ENCODE measurements at regions of chr17 and their contacts with region 1.

Region 1: GRCh38 chr17:79839363-79840268 is at the start of gene CBX4:
- DNase-seq: peak; percentile 92
- ATAC-seq: peak; percentile 44
- H3K4me3 ChIP-seq: peak within 1 kb of the TSS; percentile 77 to 100 (median 87)
- H3K27ac ChIP-seq: peak within 1 kb of the TSS; percentile 71
- H3K4me1 ChIP-seq: peaks cover 68% of the 10 kb centered on the region
- H3K27me3 ChIP-seq: no peaks in the 10 kb centered on the region; a peak in 1 of 5 replicates
- CTCF ChIP-seq: peak; percentile 89
- EP300 ChIP-seq: peak in 1 of 2 experiments; percentile 51; a peak in 1 of 4 replicates
- POLR2A ChIP-seq: peak in 1 of 2 experiments; percentile 63; a peak in 2 of 4 replicates
- RAD21 ChIP-seq: peak; percentile 95
- total RNA-seq, gene CBX4: 17.1 and 25.8 TPM in 2 replicates

Region 2: GRCh38 chr17:79741751-79742588 is 97.6 kb before region 1 on chr17:
- CTCF ChIA-PET with region 1: interaction called, 4 read pairs
- POLR2A ChIA-PET with region 1: interaction called, 18 read pairs
- in situ Hi-C with region 1: no loop called
- intact Hi-C with region 1: loop called (anchors 10 kb)
- DNase-seq: peak; percentile 67
- ATAC-seq: peak; percentile 53
- H3K4me3 ChIP-seq: peak overlapping the region; percentile 53 to 75 (median 56)
- H3K27ac ChIP-seq: peak overlapping the region; percentile 38
- H3K4me1 ChIP-seq: peaks cover 93% of the 10 kb centered on the region
- H3K27me3 ChIP-seq: peaks cover 7 to 11% of the 10 kb centered on the region in 2 experiments; a peak in 4 of 5 replicates
- CTCF ChIP-seq: peak; percentile 98
- EP300 ChIP-seq: peak in 1 of 2 experiments; percentile 30; a peak in 1 of 4 replicates
- POLR2A ChIP-seq: no peak
- RAD21 ChIP-seq: peak; percentile 86

Region 3: GRCh38 chr17:79803997-79804855 is 35.4 kb before region 1 on chr17:
- CTCF ChIA-PET with region 1: interaction called, 7 read pairs
- POLR2A ChIA-PET with region 1: interaction called, 274 read pairs
- in situ Hi-C with region 1: no loop called
- intact Hi-C with region 1: loop called (anchors 5 kb)
- DNase-seq: no peak
- ATAC-seq: peak; percentile 39
- H3K4me3 ChIP-seq: peak overlapping the region in 2 of 3 experiments; percentile 6 to 54; a peak in 3 of 6 replicates
- H3K27ac ChIP-seq: no peak overlapping the region
- H3K4me1 ChIP-seq: peaks cover 66% of the 10 kb centered on the region
- H3K27me3 ChIP-seq: peaks cover 55 to 100% of the 10 kb centered on the region in 2 experiments
- CTCF ChIP-seq: no peak
- EP300 ChIP-seq: no peak
- POLR2A ChIP-seq: no peak
- RAD21 ChIP-seq: no peak

Region 4: GRCh38 chr17:79818026-79818758 is 21.4 kb before region 1 on chr17:
- CTCF ChIA-PET with region 1: no interaction called
- POLR2A ChIA-PET with region 1: interaction called, 274 read pairs
- in situ Hi-C with region 1: no loop called
- intact Hi-C with region 1: no loop called
- DNase-seq: no peak
- ATAC-seq: peak; percentile 66
- H3K4me3 ChIP-seq: no peak overlapping the region; a peak in 1 of 6 replicates
- H3K27ac ChIP-seq: no peak overlapping the region
- H3K4me1 ChIP-seq: peaks cover 58% of the 10 kb centered on the region
- H3K27me3 ChIP-seq: peaks cover 3 to 33% of the 10 kb centered on the region in 2 experiments; a peak in 4 of 5 replicates
- CTCF ChIP-seq: peak; percentile 53
- EP300 ChIP-seq: no peak
- POLR2A ChIP-seq: no peak
- RAD21 ChIP-seq: peak; percentile 44; the same call in 1 of the 2 replicates

Region 5: DNA sequence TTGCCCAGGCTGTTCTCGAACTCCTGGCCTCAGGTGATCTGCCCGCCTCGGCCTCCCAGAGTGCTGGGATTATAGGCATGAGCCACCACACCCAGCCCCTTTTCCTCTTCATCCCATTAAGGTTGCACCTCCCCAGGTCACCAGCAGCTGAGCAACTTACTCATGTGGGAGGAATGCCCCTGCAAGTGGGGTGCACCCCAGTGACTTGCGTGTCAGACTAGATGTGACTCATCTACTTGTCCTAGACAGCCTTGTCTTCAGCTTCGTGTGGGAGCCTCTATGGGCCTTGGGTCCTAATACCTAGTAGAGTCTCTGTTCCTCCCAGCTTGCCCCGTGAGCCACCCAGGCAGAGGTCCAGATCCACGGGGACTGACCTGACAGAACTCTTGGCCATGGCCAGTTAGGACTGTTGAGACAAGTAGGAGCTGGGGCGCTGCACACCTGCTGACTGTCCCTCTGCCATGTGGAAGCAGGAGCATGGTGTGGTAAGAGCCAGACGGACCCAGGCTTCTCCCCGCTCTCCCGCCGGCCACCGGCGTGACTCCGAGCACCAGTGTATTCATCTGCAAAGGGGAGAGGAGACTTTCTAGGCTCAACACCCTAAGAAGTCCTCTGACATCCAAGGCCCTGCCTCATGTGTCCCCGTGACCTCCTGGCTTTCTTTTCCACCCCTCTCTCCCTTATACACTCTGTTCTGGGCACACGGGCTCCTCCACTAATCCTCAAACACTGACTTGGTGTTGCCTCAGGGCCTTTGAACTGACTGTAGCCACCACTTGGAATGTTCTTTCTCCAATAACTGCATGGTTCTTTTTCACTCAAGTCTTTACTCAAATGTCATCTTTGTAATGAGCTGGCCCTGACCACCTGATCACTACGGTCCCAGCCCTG is 11.2 kb after region 1 on chr17:
- CTCF ChIA-PET with region 1: no interaction called
- POLR2A ChIA-PET with region 1: interaction called, 32 read pairs
- in situ Hi-C with region 1: no loop called
- intact Hi-C with region 1: no loop called
- DNase-seq: no peak
- ATAC-seq: no peak
- H3K4me3 ChIP-seq: no peak overlapping the region
- H3K27ac ChIP-seq: no peak overlapping the region
- H3K4me1 ChIP-seq: peaks cover 90% of the 10 kb centered on the region
- H3K27me3 ChIP-seq: peaks cover under 1% of the 10 kb centered on the region in 2 experiments; a peak in 1 of 5 replicates
- CTCF ChIP-seq: no peak
- EP300 ChIP-seq: no peak
- POLR2A ChIP-seq: no peak
- RAD21 ChIP-seq: no peak

Region 6: DNA sequence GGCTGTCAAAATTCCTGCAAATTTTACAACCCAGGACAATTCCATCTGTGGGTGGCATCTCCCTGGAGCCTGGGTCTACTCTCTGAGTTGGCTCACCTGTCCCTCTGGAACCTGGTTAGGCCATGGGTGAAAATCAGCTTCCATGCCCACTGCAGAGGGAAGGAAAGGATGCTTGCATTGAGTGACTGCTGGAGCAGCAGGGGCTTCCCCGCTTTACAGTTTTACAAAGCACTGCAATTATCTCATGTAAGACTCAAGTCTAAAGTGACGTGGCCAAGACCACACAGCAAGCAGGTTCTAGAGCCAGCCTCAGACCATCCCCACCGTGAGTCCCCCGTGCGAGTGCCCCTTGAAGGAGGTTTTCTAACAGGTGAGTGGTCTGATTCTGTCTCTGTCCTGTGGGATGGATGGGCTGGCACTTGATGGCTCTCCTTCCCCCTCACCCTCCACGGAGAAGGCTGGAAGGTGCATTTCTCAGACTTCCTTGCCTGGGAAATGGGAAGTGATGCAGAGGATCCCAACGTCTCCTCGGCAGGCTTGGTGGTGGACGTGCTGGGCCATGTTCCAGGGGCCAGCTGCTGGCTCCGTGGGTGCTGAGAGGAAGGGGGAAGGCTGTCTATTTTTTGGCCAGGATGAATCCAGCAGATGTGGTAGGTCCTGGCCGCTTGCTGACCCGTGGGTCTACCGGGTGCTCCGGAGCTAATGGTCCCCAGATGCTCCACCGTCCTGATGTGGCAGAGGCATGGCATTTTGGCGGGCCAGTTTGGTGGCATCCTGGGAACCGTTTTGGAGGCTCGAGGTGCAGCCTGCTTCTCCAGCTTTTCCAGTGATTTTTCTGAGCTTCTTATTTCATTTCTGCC is 26.0 kb after region 1 on chr17:
- CTCF ChIA-PET with region 1: no interaction called
- POLR2A ChIA-PET with region 1: no interaction called
- in situ Hi-C with region 1: no loop called
- intact Hi-C with region 1: no loop called
- DNase-seq: no peak
- ATAC-seq: no peak
- H3K4me3 ChIP-seq: no peak overlapping the region
- H3K27ac ChIP-seq: no peak overlapping the region
- H3K4me1 ChIP-seq: peaks cover 29% of the 10 kb centered on the region
- H3K27me3 ChIP-seq: peaks cover 22 to 69% of the 10 kb centered on the region in 2 experiments
- CTCF ChIP-seq: no peak
- EP300 ChIP-seq: no peak
- POLR2A ChIP-seq: no peak
- RAD21 ChIP-seq: no peak

Region 7: DNA sequence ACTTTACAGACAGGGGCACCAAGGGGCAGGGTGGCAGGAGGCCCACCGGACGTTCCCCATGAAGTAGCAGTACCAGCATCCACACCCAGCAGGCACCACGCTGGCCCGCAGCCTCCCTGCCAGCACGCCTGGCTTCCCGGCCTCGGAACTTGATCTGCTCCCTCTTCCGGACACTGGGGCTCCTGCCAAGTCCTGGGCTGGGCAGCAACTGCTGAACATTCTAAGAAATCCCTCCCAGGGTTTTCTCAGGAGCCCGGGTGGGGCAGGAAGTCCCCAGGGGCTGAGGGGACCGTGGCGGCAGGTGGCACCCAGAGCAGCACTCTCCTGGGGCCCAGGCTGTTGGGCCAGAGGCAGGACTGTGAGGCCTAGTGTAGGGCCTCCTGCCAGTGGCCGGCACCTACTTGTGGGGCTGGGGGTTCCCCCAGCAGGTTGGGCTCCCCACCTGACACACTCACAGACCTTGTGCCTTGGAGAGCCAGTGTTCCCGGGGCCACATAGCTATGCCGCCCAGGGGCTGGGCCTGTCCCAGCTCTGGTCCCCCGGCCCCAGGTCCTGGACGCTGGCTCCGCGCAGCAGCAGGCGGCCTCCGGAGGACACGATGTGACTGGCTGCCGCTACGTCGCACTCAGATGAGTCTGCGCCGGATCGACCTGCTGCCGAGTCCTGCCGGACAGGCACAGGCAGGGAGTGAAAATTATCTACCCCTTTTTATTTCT is 85.8 kb after region 1 on chr17:
- CTCF ChIA-PET with region 1: no interaction called
- POLR2A ChIA-PET with region 1: interaction called, 25 read pairs
- in situ Hi-C with region 1: loop called (anchors 5 kb)
- intact Hi-C with region 1: no loop called
- DNase-seq: no peak
- ATAC-seq: peak; percentile 4
- H3K4me3 ChIP-seq: peak overlapping the region in 1 of 3 experiments; percentile 23; a peak in 1 of 6 replicates
- H3K27ac ChIP-seq: peak overlapping the region; percentile 68
- H3K4me1 ChIP-seq: peaks cover 65% of the 10 kb centered on the region
- H3K27me3 ChIP-seq: peaks cover 3 to 4% of the 10 kb centered on the region in 2 experiments; a peak in 3 of 5 replicates
- CTCF ChIP-seq: 0 out of 2 replicates have a peak, but pooled peaks have one; percentile 16
- EP300 ChIP-seq: no peak
- POLR2A ChIP-seq: no peak
- RAD21 ChIP-seq: no peak